Mammary epithelial cell (primary cell): ENCODE measurements at regions of chr15 and their contacts with region 1.

Region 1: GRCh38 chr15:88620995-88621772 is at the start of gene AEN:
- DNase-seq: peak; percentile 95
- H3K4me3 ChIP-seq: peak within 1 kb of the TSS; percentile 76 to 88 (median 78)
- H3K27ac ChIP-seq: peak within 1 kb of the TSS; percentile 95
- H3K4me1 ChIP-seq: peaks cover 26% of the 10 kb centered on the region
- H3K27me3 ChIP-seq: no peaks in the 10 kb centered on the region
- CTCF ChIP-seq: no peak
- total RNA-seq, gene AEN: 31.8 to 42.7 TPM

Region 2: DNA sequence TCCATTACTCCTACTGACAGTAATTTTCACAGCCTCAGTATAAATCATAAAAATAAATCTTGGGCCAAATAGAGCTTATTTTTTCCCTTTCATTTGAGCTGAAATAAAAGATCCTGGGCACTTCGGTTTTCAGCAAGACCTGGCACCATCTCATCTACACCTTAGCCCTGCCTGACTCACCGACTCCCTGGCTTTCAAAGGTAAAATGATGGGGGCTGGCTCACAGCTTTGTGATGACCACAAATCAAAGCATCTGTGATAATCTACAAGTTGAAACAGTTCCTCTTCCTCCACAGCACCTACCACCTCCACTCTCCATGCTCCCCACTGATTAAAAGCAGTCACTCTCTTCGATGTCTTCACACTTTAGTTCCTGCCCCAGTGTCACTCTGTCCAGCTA is 102.3 kb before region 1 on chr15:
- CTCF ChIA-PET with region 1: no interaction called
- dilution Hi-C with region 1: no loop called
- in situ Hi-C with region 1: no loop called
- intact Hi-C with region 1: no loop called
- DNase-seq: peak; percentile 27
- H3K4me3 ChIP-seq: no peak overlapping the region
- H3K27ac ChIP-seq: no peak overlapping the region
- H3K4me1 ChIP-seq: no peaks in the 10 kb centered on the region
- H3K27me3 ChIP-seq: no peaks in the 10 kb centered on the region
- CTCF ChIP-seq: no peak

Region 3: GRCh38 chr15:88546248-88547129 is 74.7 kb before region 1 on chr15 and contains the start of gene DET1:
- CTCF ChIA-PET with region 1: no interaction called
- dilution Hi-C with region 1: no loop called
- in situ Hi-C with region 1: no loop called
- intact Hi-C with region 1: loop called (anchors 1 kb)
- DNase-seq: peak; percentile 97
- H3K4me3 ChIP-seq: peak within 1 kb of the TSS; percentile 57 to 66 (median 60)
- H3K27ac ChIP-seq: peak within 1 kb of the TSS; percentile 37
- H3K4me1 ChIP-seq: no peaks in the 10 kb centered on the region
- H3K27me3 ChIP-seq: no peaks in the 10 kb centered on the region
- CTCF ChIP-seq: peak; percentile 73 to 86
- total RNA-seq, gene DET1: 2.4 to 3.0 TPM

Region 4: DNA sequence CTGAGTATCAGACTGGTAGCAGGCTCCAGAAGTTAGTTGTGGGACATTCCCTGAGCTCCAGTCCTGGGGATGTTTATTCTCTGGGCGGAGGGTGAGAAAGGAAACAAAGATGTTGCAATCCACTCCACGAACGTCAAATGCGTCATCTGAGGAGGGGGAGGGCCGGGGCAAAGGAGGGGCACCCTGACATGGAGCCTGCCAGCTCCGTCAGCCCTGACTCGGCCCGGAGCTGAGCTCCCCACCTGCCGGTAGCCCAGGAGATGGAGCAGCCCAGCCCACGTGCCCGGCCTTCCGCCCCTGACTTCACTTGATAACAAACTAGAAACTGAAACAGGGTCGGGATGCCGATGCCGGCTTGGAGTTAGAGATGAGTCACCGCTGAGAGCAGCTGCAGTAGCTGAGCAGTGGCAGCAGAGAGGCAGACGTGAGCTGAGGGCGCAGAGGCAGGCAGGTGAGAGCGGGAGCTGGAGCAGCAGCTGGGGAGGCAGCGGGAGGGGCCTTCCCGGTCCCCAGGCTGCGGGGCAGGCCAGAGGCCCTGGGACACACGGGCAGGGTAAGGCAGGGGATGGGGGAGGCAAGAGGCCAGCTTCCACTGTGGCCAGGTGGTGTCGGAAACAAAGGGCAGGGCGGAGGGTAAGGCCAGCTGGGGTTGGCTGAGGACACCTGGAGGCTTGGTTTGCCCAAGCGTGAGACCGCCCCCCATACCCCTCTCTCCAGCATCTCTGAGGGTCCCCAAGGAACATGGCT is 17.6 kb after region 1 on chr15 and contains the start of gene ISG20:
- CTCF ChIA-PET with region 1: no interaction called
- dilution Hi-C with region 1: no loop called
- in situ Hi-C with region 1: no loop called
- intact Hi-C with region 1: loop called (anchors 1 kb)
- DNase-seq: peak; percentile 99
- H3K4me3 ChIP-seq: peak within 1 kb of the TSS; percentile 19 to 61 (median 48)
- H3K27ac ChIP-seq: peak within 1 kb of the TSS; percentile 96
- H3K4me1 ChIP-seq: peaks cover 24% of the 10 kb centered on the region
- H3K27me3 ChIP-seq: no peaks in the 10 kb centered on the region
- CTCF ChIP-seq: peak; percentile 35 to 65
- total RNA-seq, gene ISG20: 1.0 to 2.9 TPM

Region 5: DNA sequence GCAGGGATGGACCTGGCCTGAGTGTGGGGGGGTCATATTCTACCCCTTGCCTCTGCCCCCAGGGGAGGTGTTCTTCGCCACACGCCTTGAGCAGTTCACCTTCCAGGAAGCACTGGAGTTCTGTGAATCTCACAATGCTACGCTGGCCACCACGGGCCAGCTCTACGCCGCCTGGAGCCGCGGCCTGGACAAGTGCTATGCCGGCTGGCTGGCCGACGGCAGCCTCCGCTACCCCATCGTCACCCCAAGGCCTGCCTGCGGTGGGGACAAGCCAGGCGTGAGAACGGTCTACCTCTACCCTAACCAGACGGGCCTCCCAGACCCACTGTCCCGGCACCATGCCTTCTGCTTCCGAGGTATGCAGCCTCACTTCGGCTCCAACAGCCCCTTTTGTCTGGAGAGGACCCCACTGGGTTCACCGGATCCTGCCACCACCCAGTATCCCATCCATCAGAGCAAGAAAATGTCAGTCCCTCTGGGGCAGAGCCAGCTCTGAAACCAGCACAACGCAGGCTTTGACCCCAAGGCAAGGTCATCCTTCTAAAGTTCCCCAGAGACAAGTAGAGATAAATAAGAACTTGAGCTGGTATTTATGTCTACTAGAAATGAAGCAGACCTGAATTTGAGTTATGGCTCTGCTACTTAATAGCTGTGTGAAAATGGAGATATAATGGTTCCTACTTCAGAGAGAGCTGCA is 228.3 kb after region 1 on chr15:
- CTCF ChIA-PET with region 1: no interaction called
- dilution Hi-C with region 1: no loop called
- in situ Hi-C with region 1: no loop called
- intact Hi-C with region 1: no loop called
- DNase-seq: no peak
- H3K4me3 ChIP-seq: no peak overlapping the region
- H3K27ac ChIP-seq: no peak overlapping the region
- H3K4me1 ChIP-seq: no peaks in the 10 kb centered on the region
- H3K27me3 ChIP-seq: peaks cover 5% of the 10 kb centered on the region
- CTCF ChIP-seq: no peak